ENCODE measurements at regions of chr7 and their contacts with region 1.

Region 1: GRCh38 chr7:44973610-44974401 is 5.0 kb downstream of the MYO1G start:
- DNase-seq: peak in 1 of 2 experiments; percentile 35
- ATAC-seq: peak; percentile 52 to 81; a peak in 5 of 6 replicates
- H3K4me3 ChIP-seq: no peak overlapping the region
- H3K27ac ChIP-seq: no peak overlapping the region; a peak in 1 of 6 replicates
- H3K4me1 ChIP-seq: peaks cover 4% of the 10 kb centered on the region; the same call in 1 of the 3 replicates
- CTCF ChIP-seq: peak; percentile 25; the same call in 1 of the 3 replicates
- EP300 ChIP-seq: no peak
- POLR2A ChIP-seq: no peak
- RAD21 ChIP-seq: peak in 1 of 2 experiments; percentile 46; a peak in 2 of 5 replicates

Region 2: GRCh38 chr7:44962483-44963251 is 11.1 kb before region 1 on chr7:
- CTCF ChIA-PET with region 1: interaction called, 21 read pairs
- POLR2A ChIA-PET with region 1: interaction called, 3 read pairs
- DNase-seq: no peak
- ATAC-seq: no peak; a peak in 1 of 6 replicates
- H3K4me3 ChIP-seq: no peak overlapping the region
- H3K27ac ChIP-seq: no peak overlapping the region
- H3K4me1 ChIP-seq: no peaks in the 10 kb centered on the region
- CTCF ChIP-seq: no peak
- EP300 ChIP-seq: no peak
- POLR2A ChIP-seq: no peak
- RAD21 ChIP-seq: no peak

Region 3: DNA sequence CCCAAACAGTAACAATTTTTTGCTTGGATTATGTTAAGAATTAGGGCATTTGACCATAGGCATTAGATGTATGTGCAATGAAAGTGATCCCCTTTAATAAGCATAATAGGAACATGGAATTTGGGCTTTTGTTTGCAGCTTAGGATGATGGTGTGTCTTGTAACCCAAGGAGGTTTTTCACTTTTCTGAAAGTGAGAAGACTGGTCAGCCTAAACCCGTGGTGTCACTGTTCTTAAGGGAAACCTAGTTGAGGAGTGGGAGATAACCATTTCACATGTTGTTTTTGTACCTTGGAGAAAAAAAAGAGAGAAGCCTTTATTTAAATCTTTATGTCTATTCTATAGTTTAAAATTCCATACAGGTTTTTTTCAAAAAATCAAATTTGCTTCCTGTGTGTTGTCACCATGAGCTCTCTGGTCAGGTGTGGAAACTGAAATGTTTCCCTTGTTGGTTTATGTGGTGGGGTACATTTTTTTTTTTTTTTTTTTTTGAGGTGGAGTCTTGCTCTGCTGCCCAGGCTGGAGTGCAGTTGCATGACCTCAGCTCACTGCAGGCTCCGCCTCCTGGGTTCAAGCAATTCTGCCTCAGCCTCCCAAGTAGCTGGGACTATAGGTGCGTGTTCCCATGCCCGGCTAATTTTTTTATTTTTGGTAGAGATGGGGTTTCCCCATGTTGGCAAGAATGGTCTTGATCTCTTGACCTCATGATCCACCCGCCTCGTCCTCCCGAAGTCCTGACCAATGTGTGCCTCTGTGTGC is 33.9 kb after region 1 on chr7:
- CTCF ChIA-PET with region 1: no interaction called
- POLR2A ChIA-PET with region 1: no interaction called
- DNase-seq: no peak
- ATAC-seq: no peak
- H3K4me3 ChIP-seq: no peak overlapping the region
- H3K27ac ChIP-seq: no peak overlapping the region
- H3K4me1 ChIP-seq: no peaks in the 10 kb centered on the region
- CTCF ChIP-seq: no peak
- EP300 ChIP-seq: no peak
- POLR2A ChIP-seq: no peak
- RAD21 ChIP-seq: no peak

Region 4: GRCh38 chr7:45103958-45104843 is 130.4 kb after region 1 on chr7:
- CTCF ChIA-PET with region 1: no interaction called
- POLR2A ChIA-PET with region 1: no interaction called
- DNase-seq: no peak
- ATAC-seq: no peak
- H3K4me3 ChIP-seq: no peak overlapping the region
- H3K27ac ChIP-seq: no peak overlapping the region
- H3K4me1 ChIP-seq: peaks cover 15% of the 10 kb centered on the region; the same call in 2 of the 3 replicates
- CTCF ChIP-seq: no peak
- EP300 ChIP-seq: no peak
- POLR2A ChIP-seq: no peak
- RAD21 ChIP-seq: no peak